ENCODE measurements at regions of chr18 and their contacts with region 1.

Region 1: DNA sequence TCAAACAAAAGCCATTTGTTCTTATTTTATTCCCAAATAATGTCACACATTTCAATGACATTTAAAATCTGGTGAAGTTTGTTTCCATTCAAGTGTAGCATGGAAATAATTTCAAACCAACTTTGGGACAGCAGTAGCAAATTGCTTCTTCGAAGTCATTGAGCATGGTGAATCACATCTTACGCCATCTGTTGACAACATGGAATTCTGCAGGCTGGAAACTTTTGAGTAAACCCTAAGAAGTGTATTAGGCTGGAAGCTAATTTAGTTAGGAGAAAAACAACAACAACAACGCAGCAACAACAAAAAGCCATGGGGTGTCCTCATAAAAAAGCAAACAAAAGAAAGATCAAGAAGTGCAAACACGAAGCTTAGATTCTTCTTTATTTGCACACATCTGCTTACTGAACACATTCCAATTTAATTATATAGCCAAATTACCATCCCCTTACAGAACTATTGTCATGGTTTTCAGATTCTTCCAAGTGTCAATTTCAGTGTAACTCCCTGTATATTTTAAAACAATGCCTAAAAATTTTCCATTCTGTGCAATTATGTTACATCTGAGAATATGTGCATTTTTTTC is 659.0 kb upstream of the CDH7 start:
- DNase-seq: no peak
- ATAC-seq: peak in 3 of 4 donors; percentile 59 to 67 (median 66)
- H3K4me3 ChIP-seq: no peak overlapping the region
- H3K27ac ChIP-seq: no peak overlapping the region
- H3K4me1 ChIP-seq: no peaks in the 10 kb centered on the region
- H3K27me3 ChIP-seq: no peaks in the 10 kb centered on the region
- CTCF ChIP-seq: peak in 2 of 4 donors; percentile 36 to 51

Region 2: GRCh38 chr18:64037812-64038414 is 1053.9 kb before region 1 on chr18:
- intact Hi-C with region 1: loop called in 1 of 3 experiments (anchors 10 kb)
- DNase-seq: no peak
- ATAC-seq: peak in 2 of 4 donors; percentile 51 to 54
- H3K4me3 ChIP-seq: no peak overlapping the region
- H3K27ac ChIP-seq: no peak overlapping the region
- H3K4me1 ChIP-seq: no peaks in the 10 kb centered on the region
- H3K27me3 ChIP-seq: no peaks in the 10 kb centered on the region
- CTCF ChIP-seq: peak in 3 of 4 donors; percentile 29 to 43 (median 43)

Measured in pancreas (tissue), 10 donors.